ENCODE measurements at regions of chr17 and their contacts with region 1.

Region 1: GRCh38 chr17:28763804-28764266 is 20.0 kb downstream of the TRAF4 start:
- DNase-seq: peak in 5 of 6 donors; percentile 66 to 80 (median 77)
- ATAC-seq: peak; percentile 68 to 82 (median 77)
- H3K4me3 ChIP-seq: no peak overlapping the region
- H3K27ac ChIP-seq: no peak overlapping the region
- H3K4me1 ChIP-seq: no peaks in the 10 kb centered on the region
- H3K27me3 ChIP-seq: no peaks in the 10 kb centered on the region
- CTCF ChIP-seq: peak; percentile 69 to 92 (median 80)

Region 2: GRCh38 chr17:28902819-28903545 is 139.1 kb after region 1 on chr17 and contains the start of gene DHRS13:
- intact Hi-C with region 1: loop called in 2 of 3 experiments (anchors 5 to 10 kb)
- DNase-seq: peak; percentile 84 to 99 (median 96)
- ATAC-seq: peak; percentile 94 to 96 (median 94)
- H3K4me3 ChIP-seq: peak within 1 kb of the TSS; percentile 51 to 84 (median 65)
- H3K27ac ChIP-seq: peak within 1 kb of the TSS; percentile 36 to 83 (median 72)
- H3K4me1 ChIP-seq: peaks cover 6 to 13% (median 12%) of the 10 kb centered on the region in 3 donors
- H3K27me3 ChIP-seq: no peaks in the 10 kb centered on the region
- CTCF ChIP-seq: peak; percentile 84 to 96 (median 90)
- total RNA-seq, gene DHRS13: 2.6 to 6.1 (median 4.5) TPM

Region 3: GRCh38 chr17:28908640-28909167 is 144.9 kb after region 1 on chr17:
- intact Hi-C with region 1: loop called in 2 of 3 experiments (anchors 5 to 10 kb)
- DNase-seq: peak in 1 of 6 donors; percentile 39
- ATAC-seq: peak in 3 of 4 donors; percentile 31 to 44 (median 32)
- H3K4me3 ChIP-seq: no peak overlapping the region
- H3K27ac ChIP-seq: no peak overlapping the region
- H3K4me1 ChIP-seq: peaks cover 0 to 5% (median 0%) of the 10 kb centered on the region in 3 donors
- H3K27me3 ChIP-seq: no peaks in the 10 kb centered on the region
- CTCF ChIP-seq: no peak